Activated T-helper 1 cell treated with anti-CD3 and anti-CD28 coated beads, Interleukin-12 subunit alpha, Interleukin-12 subunit beta, Interleukin-2, Interleukin-4 antibody, amounts not matched to agents 30 ng/mL and 10 ng/mL and 1 ng/mL, durations not matched to agents 14 hours and 24 hours and 36 hours (primary cell): ENCODE measurements at regions of chr7 and their contacts with region 1.

Region 1: GRCh38 chr7:19117091-19117869 is at the start of gene TWIST1:
- DNase-seq: no peak
- H3K4me3 Mint-ChIP-seq: peak within 1 kb of the TSS; percentile 71
- H3K27ac Mint-ChIP-seq: no peak within 1 kb of the TSS
- H3K4me1 Mint-ChIP-seq: no peaks in the 10 kb centered on the region
- H3K27me3 Mint-ChIP-seq: peaks cover 65% of the 10 kb centered on the region
- total RNA-seq, gene TWIST1: 5.6 and 8.1 TPM in 2 replicates

Region 2: GRCh38 chr7:18740579-18740988 is 376.7 kb before region 1 on chr7:
- intact Hi-C with region 1: loop called (anchors 10 kb)
- DNase-seq: peak; percentile 4
- H3K4me3 Mint-ChIP-seq: no peak overlapping the region
- H3K27ac Mint-ChIP-seq: peak overlapping the region; percentile 9
- H3K4me1 Mint-ChIP-seq: peaks cover 14% of the 10 kb centered on the region
- H3K27me3 Mint-ChIP-seq: no peaks in the 10 kb centered on the region

Region 3: GRCh38 chr7:18859318-18859717 is 258.0 kb before region 1 on chr7:
- intact Hi-C with region 1: loop called (anchors 5 kb)
- DNase-seq: peak; percentile 1
- H3K4me3 Mint-ChIP-seq: peak overlapping the region; percentile 45
- H3K27ac Mint-ChIP-seq: peak overlapping the region; percentile 96
- H3K4me1 Mint-ChIP-seq: peaks cover 33% of the 10 kb centered on the region
- H3K27me3 Mint-ChIP-seq: no peaks in the 10 kb centered on the region

Region 4: GRCh38 chr7:19144661-19145433 is 27.6 kb after region 1 on chr7 and contains the start of gene FERD3L:
- intact Hi-C with region 1: loop called (anchors 1 kb)
- DNase-seq: no peak
- H3K4me3 Mint-ChIP-seq: no peak within 1 kb of the TSS
- H3K27ac Mint-ChIP-seq: no peak within 1 kb of the TSS
- H3K4me1 Mint-ChIP-seq: no peaks in the 10 kb centered on the region
- H3K27me3 Mint-ChIP-seq: peaks cover 21% of the 10 kb centered on the region
- total RNA-seq, gene FERD3L: not detected in 2 replicates

Region 5: GRCh38 chr7:19665399-19666008 is 548.2 kb after region 1 on chr7:
- intact Hi-C with region 1: loop called (anchors 5 kb)
- DNase-seq: no peak
- H3K4me3 Mint-ChIP-seq: no peak overlapping the region
- H3K27ac Mint-ChIP-seq: no peak overlapping the region
- H3K4me1 Mint-ChIP-seq: no peaks in the 10 kb centered on the region
- H3K27me3 Mint-ChIP-seq: peaks cover 5% of the 10 kb centered on the region

Region 6: DNA sequence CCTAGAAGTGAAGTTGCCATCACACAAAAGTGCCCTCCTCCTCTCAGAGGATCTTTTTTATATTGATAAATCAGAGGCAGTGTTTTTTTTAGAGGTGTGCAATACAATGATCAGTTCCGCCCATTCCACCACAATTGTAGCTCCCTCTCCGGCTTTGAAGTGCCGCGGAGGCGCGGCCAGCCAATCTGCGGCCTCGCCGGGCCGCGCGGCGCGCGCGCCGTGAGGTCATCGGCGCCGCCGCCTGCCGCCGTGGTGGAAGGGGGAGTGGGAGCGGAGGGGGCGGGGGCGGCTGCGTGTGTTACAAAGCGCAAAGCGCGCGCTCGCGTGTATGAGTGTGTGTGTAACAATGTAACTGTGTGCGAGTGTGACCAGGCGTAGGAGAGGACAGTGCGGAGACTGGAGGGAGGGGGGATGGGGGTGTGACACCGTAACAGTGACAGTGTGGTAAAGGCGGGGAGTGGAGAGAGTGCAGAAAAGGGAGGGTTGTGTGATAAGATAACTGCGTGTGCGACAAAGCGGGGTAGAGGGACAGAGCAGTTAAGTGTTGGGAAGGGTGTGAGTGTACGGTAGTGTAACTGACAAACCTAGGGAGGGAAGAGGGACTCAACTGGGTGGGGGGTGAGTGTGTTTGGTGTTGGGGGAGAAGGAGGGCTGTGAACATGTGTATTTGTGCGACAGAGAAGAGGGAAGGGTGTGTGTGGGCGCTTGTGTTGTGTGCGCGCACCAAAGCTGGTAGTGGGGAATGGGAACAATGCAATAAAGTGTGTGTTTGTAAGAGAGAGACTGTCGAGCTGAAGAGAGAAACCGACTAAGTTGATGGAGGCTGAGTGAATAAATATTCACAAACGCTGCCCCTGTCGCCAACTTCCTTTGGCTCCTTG is 1669.7 kb after region 1 on chr7 and contains the start of gene SP8:
- intact Hi-C with region 1: loop called (anchors 5 kb)
- DNase-seq: no peak
- H3K4me3 Mint-ChIP-seq: peak within 1 kb of the TSS; percentile 39
- H3K27ac Mint-ChIP-seq: peak within 1 kb of the TSS; percentile 83
- H3K4me1 Mint-ChIP-seq: peaks cover 21% of the 10 kb centered on the region
- H3K27me3 Mint-ChIP-seq: peaks cover 74% of the 10 kb centered on the region
- total RNA-seq, gene SP8: not detected in 2 replicates